ENCODE measurements at regions of chr10 and their contacts with region 1.

Region 1: DNA sequence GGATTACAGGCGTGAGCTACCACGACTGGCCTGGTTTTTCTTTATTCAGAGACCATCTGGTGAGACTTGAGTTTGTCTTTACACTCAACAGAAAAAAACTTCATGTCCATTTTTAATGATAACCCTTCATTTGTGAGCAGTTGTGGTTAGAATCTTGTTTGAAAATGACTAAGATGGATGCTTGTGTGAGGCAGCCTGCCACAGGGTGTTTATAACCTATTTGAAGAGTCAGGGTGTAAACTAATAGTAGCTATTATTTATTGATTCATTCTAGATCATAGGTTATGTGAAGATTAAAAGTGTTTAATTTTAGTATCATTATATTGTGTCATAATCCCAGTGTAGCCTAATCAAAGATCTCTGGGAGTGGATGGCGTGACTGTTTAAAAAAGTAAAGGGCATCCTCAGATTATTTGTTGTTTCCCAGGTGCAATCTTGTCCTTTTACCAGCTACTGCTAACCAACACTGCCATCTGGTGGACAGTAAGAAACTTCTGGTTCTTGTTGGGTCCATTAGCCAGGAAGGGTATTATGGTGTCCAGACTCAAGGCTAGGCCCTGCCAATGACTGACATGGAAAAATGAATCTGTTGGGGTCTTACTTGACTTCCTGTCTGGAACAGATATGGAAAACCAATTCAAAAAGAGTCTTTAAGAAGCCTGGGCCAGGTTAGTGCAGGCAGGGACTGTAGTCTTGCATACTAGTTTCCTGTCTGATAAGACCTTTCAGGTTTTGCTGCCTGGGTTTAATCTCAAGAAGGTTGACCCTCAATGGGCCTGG is 24.9 kb downstream of the NRBF2 start:
- DNase-seq: peak; percentile 62 to 66 (median 64)
- H3K4me3 ChIP-seq: no peak overlapping the region
- H3K4me3 Mint-ChIP-seq: no peak overlapping the region
- H3K27ac ChIP-seq: no peak overlapping the region
- H3K27ac Mint-ChIP-seq: peak overlapping the region in 2 of 7 donors; percentile 47
- H3K4me1 ChIP-seq: no peaks in the 10 kb centered on the region
- H3K4me1 Mint-ChIP-seq: peaks cover 7 to 12% (median 9%) of the 10 kb centered on the region in 4 donors
- H3K27me3 ChIP-seq: no peaks in the 10 kb centered on the region
- H3K27me3 Mint-ChIP-seq: no peaks in the 10 kb centered on the region

Region 2: DNA sequence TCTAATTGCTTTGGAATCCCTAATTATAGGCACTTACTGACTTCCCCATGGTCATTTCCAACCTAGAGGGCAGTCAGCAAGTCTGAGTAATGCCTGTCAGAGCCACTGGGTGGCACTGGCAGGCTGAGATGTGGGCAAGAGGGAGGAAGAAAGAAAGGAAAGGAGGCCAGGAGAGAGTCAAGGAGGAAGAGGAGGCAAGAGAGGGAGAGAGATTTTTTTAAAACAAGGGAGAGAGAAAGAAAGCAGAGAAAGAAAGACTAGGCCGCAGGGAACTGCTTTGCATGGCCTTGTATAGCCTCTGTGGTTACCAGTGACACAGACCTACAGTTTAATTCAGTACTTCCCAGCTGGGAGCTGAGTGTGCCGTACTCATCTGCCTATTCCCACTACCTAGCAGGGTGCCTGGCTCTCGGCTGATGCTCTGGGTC is 563.9 kb before region 1 on chr10:
- CTCF ChIA-PET with region 1: interaction called, 49 read pairs
- POLR2A ChIA-PET with region 1: no interaction called
- intact Hi-C with region 1: loop called (anchors 1 kb)
- DNase-seq: peak; percentile 38 to 59 (median 44)
- H3K4me3 ChIP-seq: no peak overlapping the region
- H3K4me3 Mint-ChIP-seq: peak overlapping the region in 1 of 8 donors; percentile 10
- H3K27ac ChIP-seq: no peak overlapping the region
- H3K27ac Mint-ChIP-seq: peak overlapping the region in 1 of 7 donors; percentile 9
- H3K4me1 ChIP-seq: no peaks in the 10 kb centered on the region
- H3K4me1 Mint-ChIP-seq: peaks cover 0 to 4% (median under 1%) of the 10 kb centered on the region in 4 donors
- H3K27me3 ChIP-seq: no peaks in the 10 kb centered on the region
- H3K27me3 Mint-ChIP-seq: peaks cover 3 to 5% of the 10 kb centered on the region in 2 donors

Region 3: GRCh38 chr10:62610649-62611229 is 547.3 kb before region 1 on chr10:
- CTCF ChIA-PET with region 1: interaction called, 68 read pairs
- POLR2A ChIA-PET with region 1: no interaction called
- intact Hi-C with region 1: loop called (anchors 1 kb)
- DNase-seq: peak; percentile 76 to 80 (median 78)
- H3K4me3 ChIP-seq: no peak overlapping the region
- H3K4me3 Mint-ChIP-seq: no peak overlapping the region
- H3K27ac ChIP-seq: no peak overlapping the region
- H3K27ac Mint-ChIP-seq: peak overlapping the region in 2 of 7 donors; percentile 46 to 78
- H3K4me1 ChIP-seq: peaks cover 4% of the 10 kb centered on the region
- H3K4me1 Mint-ChIP-seq: peaks cover 3 to 9% (median 4%) of the 10 kb centered on the region in 4 donors
- H3K27me3 ChIP-seq: no peaks in the 10 kb centered on the region
- H3K27me3 Mint-ChIP-seq: peaks cover 4 to 8% of the 10 kb centered on the region in 2 donors

Region 4: GRCh38 chr10:62916141-62916603 is 241.9 kb before region 1 on chr10:
- CTCF ChIA-PET with region 1: no interaction called
- POLR2A ChIA-PET with region 1: no interaction called
- intact Hi-C with region 1: no loop called
- DNase-seq: no peak
- H3K4me3 ChIP-seq: no peak overlapping the region
- H3K4me3 Mint-ChIP-seq: no peak overlapping the region
- H3K27ac ChIP-seq: no peak overlapping the region
- H3K27ac Mint-ChIP-seq: no peak overlapping the region
- H3K4me1 ChIP-seq: no peaks in the 10 kb centered on the region
- H3K4me1 Mint-ChIP-seq: no peaks in the 10 kb centered on the region
- H3K27me3 ChIP-seq: no peaks in the 10 kb centered on the region
- H3K27me3 Mint-ChIP-seq: peaks cover 4 to 5% of the 10 kb centered on the region in 2 donors

Region 5: DNA sequence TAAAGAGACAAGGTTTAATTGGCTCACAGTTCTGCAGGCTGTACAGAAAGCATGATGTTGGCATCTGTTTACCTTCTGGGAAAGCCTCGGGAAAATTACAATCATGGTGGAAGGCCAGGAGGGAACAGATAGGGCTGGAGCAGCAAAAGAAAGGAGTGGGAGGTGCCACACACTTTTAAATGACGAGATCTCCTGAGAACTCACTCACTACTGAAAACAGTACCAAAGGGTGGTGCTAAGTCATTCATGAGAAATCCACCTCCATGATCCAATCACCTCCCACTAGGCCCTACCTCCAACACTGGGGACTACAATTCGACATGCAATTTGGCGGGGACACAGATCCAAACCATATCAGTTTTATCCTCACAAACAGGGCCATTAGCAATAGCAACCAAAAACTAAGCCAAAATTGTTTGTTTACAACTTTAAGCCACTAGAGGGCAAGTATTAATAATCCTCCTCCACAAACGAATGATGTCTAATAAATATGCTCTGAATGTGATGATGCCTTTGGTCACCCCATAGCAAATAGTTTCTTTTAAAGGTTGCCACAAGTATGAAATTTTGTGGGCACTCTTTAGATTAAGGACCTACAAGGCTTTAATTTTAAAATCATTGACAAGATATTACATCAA is 154.1 kb before region 1 on chr10:
- CTCF ChIA-PET with region 1: interaction called, 6 read pairs
- POLR2A ChIA-PET with region 1: no interaction called
- intact Hi-C with region 1: loop called (anchors 1 kb)
- DNase-seq: peak in 1 of 5 donors; percentile 6
- H3K4me3 ChIP-seq: no peak overlapping the region
- H3K4me3 Mint-ChIP-seq: no peak overlapping the region
- H3K27ac ChIP-seq: no peak overlapping the region
- H3K27ac Mint-ChIP-seq: no peak overlapping the region
- H3K4me1 ChIP-seq: no peaks in the 10 kb centered on the region
- H3K4me1 Mint-ChIP-seq: peaks cover 0 to 1% (median 0%) of the 10 kb centered on the region in 4 donors
- H3K27me3 ChIP-seq: no peaks in the 10 kb centered on the region
- H3K27me3 Mint-ChIP-seq: peaks cover 4 to 20% of the 10 kb centered on the region in 2 donors

Region 6: DNA sequence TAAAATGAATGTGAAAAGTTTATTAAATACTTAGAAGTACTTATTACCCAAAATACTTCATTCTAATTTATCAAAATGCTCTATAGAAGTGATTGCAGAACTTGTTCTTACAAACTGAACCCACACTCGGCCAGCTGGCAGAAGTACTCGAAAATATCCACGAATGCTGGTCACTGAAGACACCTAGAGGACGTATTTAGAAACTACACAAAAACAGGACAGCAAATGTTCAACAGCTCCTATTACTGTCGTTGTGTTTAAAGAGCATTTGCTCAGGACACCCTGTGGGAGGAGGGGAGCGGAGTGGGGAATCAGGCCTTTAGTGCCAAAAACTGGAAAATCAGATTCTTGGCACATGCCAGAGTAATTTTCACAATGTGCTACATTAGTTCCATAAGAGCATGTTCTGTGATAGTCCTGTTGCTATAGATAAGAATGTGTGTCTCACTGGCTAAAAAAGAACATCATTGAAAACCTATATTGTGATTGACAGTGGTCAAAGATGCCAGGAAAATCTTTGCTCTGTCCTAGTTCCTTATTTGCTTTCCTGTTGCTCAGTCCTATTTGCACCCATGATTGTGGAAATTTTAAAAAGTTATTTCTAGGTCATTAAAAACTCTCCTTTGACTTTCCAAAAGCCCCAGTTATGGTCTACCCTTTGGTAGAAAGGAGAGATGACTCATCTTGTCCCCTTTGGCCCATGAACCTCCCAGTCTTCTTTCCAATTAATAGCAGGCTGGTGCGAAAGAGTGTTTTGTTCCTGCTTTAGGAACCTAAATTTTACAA is 73.9 kb before region 1 on chr10:
- CTCF ChIA-PET with region 1: interaction called, 16 read pairs
- POLR2A ChIA-PET with region 1: no interaction called
- intact Hi-C with region 1: loop called (anchors 1 kb)
- DNase-seq: peak; percentile 40 to 49 (median 48)
- H3K4me3 ChIP-seq: no peak overlapping the region
- H3K4me3 Mint-ChIP-seq: no peak overlapping the region
- H3K27ac ChIP-seq: no peak overlapping the region
- H3K27ac Mint-ChIP-seq: no peak overlapping the region
- H3K4me1 ChIP-seq: no peaks in the 10 kb centered on the region
- H3K4me1 Mint-ChIP-seq: peaks cover 0 to 1% (median 0%) of the 10 kb centered on the region in 4 donors
- H3K27me3 ChIP-seq: no peaks in the 10 kb centered on the region
- H3K27me3 Mint-ChIP-seq: peaks cover 8 to 12% of the 10 kb centered on the region in 2 donors

Region 7: GRCh38 chr10:63133056-63133820 is 24.8 kb before region 1 on chr10 and contains the start of gene NRBF2:
- CTCF ChIA-PET with region 1: interaction called, 28 read pairs
- POLR2A ChIA-PET with region 1: interaction called, 3 read pairs
- intact Hi-C with region 1: loop called (anchors 1 kb)
- DNase-seq: peak; percentile 97 to 98 (median 98)
- H3K4me3 ChIP-seq: peak within 1 kb of the TSS; percentile 81 to 88
- H3K4me3 Mint-ChIP-seq: peak within 1 kb of the TSS; percentile 92 to 95 (median 92)
- H3K27ac ChIP-seq: peak within 1 kb of the TSS; percentile 96
- H3K27ac Mint-ChIP-seq: peak within 1 kb of the TSS; percentile 92 to 98 (median 97)
- H3K4me1 ChIP-seq: peaks cover 46% of the 10 kb centered on the region
- H3K4me1 Mint-ChIP-seq: peaks cover 24 to 45% (median 35%) of the 10 kb centered on the region in 4 donors
- H3K27me3 ChIP-seq: no peaks in the 10 kb centered on the region
- H3K27me3 Mint-ChIP-seq: peaks cover 0 to 7% of the 10 kb centered on the region in 2 donors
- total RNA-seq, gene NRBF2: 17.8 to 18.2 TPM

Region 8: DNA sequence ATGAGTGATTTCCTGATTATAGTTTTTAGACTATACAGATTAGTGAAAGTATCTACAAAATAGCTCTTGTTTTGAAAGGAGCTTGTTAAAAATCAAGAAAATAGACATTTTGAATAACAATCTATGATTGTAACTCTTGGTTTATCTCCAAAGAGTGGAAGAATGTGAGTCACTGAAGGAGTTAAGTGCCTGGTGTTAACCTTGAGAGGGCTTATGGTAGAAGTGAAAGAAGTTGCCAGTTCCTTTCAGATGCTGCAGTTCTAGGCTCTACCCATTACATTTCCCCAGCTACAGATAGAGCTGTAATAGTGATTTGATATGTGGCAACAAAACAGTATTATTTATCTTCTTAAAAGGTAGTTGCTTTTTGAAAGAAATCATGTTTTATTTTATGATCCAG is 12.3 kb before region 1 on chr10:
- CTCF ChIA-PET with region 1: interaction called, 76 read pairs
- POLR2A ChIA-PET with region 1: interaction called, 3 read pairs
- intact Hi-C with region 1: no loop called
- DNase-seq: no peak
- H3K4me3 ChIP-seq: no peak overlapping the region
- H3K4me3 Mint-ChIP-seq: no peak overlapping the region
- H3K27ac ChIP-seq: no peak overlapping the region
- H3K27ac Mint-ChIP-seq: peak overlapping the region in 3 of 7 donors; percentile 43 to 54 (median 51)
- H3K4me1 ChIP-seq: peaks cover 24% of the 10 kb centered on the region
- H3K4me1 Mint-ChIP-seq: peaks cover 33 to 67% (median 53%) of the 10 kb centered on the region in 4 donors
- H3K27me3 ChIP-seq: no peaks in the 10 kb centered on the region
- H3K27me3 Mint-ChIP-seq: no peaks in the 10 kb centered on the region